CD4-positive, alpha-beta memory T cell (primary cell): ENCODE measurements at regions of chr19 and their contacts with region 1.

Region 1: DNA sequence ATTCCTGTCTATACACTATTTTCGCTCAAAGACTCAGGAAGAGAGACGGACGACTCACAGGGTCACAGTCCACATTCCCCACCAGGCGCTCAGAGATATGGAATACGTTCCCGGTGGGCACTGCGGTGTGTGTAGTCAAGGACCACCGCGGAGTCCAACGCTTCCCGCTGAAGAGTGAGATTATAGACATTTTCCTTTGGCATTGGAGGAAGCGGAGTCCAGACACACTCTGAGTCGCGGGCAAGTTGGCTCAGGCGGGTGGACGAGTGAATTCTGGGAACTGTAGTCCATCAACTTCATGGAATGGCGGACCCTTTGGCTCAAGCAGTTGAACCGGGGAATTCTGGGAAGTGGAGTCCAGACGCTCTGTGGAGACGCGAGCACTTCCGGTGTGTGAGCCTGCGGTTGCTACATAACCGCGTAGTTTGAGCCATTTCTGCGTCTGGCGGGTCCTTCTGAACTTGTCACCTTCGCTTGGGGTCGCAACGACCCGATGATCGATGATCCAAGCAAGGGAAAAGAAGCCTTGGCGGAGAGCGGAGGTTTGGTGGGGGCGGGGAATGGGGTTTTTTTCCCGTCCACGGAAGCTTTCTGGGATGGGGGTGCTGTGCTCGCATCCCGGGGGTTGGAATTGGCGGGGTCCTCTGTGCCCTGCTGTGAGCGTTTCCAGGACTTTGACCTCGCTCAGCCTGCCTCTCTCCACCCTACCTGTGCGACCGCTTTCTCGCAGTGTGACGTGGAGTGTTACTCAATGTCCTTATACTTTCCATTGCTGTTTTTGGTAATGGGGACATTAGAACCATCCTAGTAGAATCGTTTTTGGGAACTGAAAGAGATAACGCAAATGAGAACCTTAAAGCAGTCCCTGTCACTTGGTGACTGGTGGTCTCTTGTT is at the start of gene ZNF230:
- DNase-seq: peak; percentile 80 to 89 (median 83)
- H3K4me3 ChIP-seq: peak within 1 kb of the TSS; percentile 66 to 75
- H3K4me3 Mint-ChIP-seq: peak within 1 kb of the TSS; percentile 98 to 100 (median 99)
- H3K27ac ChIP-seq: peak within 1 kb of the TSS; percentile 58
- H3K27ac Mint-ChIP-seq: peak within 1 kb of the TSS; percentile 79 to 98 (median 97)
- H3K4me1 ChIP-seq: peaks cover 16% of the 10 kb centered on the region
- H3K4me1 Mint-ChIP-seq: peaks cover 22 to 30% (median 23%) of the 10 kb centered on the region in 4 donors
- H3K27me3 ChIP-seq: no peaks in the 10 kb centered on the region
- H3K27me3 Mint-ChIP-seq: no peaks in the 10 kb centered on the region
- total RNA-seq, gene ZNF230: 16.6 to 18.4 TPM

Region 2: DNA sequence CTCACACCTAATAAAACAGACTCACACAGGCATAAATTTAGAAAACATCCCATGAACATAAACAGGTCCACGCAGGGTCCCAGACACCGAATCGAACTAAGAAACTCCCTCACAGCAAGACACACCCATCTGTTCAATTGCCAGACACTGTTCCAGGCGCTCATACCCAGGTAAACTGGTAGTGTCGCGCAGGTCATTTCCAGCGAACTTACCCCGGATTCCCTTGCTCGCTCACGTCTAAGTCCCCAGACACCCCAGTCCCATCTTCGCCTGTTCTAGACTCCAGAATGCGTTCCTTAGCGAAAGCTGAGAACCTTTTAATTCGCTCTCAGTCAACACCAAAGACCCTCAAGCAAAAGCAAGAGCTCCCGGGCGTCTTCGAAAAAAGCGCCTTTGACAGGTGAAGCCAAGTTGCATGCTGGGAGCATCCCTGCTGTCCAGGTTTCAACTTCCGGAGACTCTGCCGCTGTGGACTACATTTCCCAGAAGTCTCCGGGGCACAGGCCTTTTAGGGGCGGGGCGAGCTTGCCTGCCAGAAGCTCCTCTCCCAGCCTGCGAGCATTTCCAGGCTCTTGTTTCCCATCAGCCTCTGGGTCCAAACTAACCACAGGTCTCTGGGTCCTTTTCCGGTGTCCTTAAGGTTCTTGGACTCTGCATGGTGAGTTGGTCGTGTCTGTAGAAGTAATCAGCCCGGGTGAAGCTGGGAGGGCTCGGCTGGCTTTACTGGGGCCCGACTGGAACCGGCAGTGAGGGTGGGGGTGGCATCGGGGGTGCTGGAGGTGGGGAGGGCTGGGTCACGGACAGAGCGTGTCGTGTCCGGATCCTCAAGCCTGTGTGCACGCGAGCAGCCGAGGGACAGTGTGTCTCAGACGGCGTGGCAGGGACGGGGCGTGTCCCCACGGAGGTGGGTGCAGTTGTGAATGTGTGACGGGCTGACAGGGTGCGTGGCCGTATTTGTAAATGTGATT is 175.7 kb before region 1 on chr19 and contains the start of gene ZNF283:
- CTCF ChIA-PET with region 1: no interaction called
- POLR2A ChIA-PET with region 1: no interaction called
- intact Hi-C with region 1: loop called (anchors 1 kb)
- DNase-seq: peak; percentile 73 to 80 (median 76)
- H3K4me3 ChIP-seq: peak within 1 kb of the TSS; percentile 70 to 73
- H3K4me3 Mint-ChIP-seq: peak within 1 kb of the TSS; percentile 73 to 94 (median 91)
- H3K27ac ChIP-seq: peak within 1 kb of the TSS; percentile 33
- H3K27ac Mint-ChIP-seq: peak within 1 kb of the TSS; percentile 41 to 89 (median 83)
- H3K4me1 ChIP-seq: peaks cover 13% of the 10 kb centered on the region
- H3K4me1 Mint-ChIP-seq: peaks cover 9 to 20% (median 16%) of the 10 kb centered on the region in 4 donors
- H3K27me3 ChIP-seq: no peaks in the 10 kb centered on the region
- H3K27me3 Mint-ChIP-seq: peaks cover 0 to 1% of the 10 kb centered on the region in 2 donors
- total RNA-seq, gene ZNF283: 18.1 to 20.7 TPM

Region 3: GRCh38 chr19:43928820-43929219 is 74.0 kb before region 1 on chr19:
- CTCF ChIA-PET with region 1: no interaction called
- POLR2A ChIA-PET with region 1: no interaction called
- intact Hi-C with region 1: no loop called
- DNase-seq: no peak
- H3K4me3 ChIP-seq: no peak overlapping the region
- H3K4me3 Mint-ChIP-seq: no peak overlapping the region
- H3K27ac ChIP-seq: no peak overlapping the region
- H3K27ac Mint-ChIP-seq: no peak overlapping the region
- H3K4me1 ChIP-seq: peaks cover 8% of the 10 kb centered on the region
- H3K4me1 Mint-ChIP-seq: peaks cover 5 to 24% (median 10%) of the 10 kb centered on the region in 4 donors
- H3K27me3 ChIP-seq: no peaks in the 10 kb centered on the region
- H3K27me3 Mint-ChIP-seq: no peaks in the 10 kb centered on the region

Region 4: DNA sequence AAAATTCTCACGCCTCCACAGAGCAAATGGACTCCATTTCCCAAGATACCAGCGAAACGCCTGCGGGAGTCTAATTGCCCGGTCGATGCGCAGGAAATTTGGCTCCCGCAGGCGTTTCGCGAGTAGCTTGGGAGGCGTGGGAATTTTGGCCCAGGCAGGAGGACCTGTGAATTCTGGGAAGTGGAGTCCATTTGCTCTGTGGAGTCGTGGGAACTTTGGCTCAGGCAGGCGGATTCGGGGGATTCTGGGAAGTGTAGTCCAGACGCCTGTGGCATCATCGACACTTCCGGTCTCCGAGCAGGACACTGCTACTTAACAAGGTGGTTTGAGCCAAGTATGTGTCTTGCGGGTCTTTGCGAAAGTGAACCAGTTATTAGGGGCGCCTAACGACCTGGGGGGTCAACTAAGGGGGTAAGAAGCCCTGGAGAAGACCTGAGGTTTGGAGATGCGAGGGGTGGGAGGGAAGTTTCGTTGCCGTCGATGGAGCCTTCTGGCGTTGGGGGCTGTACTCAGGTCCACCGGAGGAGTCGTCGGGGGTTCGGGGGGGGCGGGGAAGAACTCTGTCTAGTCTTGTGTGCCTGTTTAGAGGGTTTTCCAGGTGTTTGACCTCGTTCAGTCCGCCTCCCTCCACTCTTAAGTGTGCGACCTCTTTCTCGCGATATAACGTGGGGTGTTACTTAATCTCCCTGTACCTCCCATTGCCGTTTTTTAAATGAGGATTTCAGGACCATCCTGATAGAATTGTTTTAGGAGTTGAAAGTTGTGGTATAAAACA is 18.7 kb before region 1 on chr19 and contains the start of gene ZNF155:
- CTCF ChIA-PET with region 1: no interaction called
- POLR2A ChIA-PET with region 1: interaction called, 3 read pairs
- intact Hi-C with region 1: loop called (anchors 1 kb)
- DNase-seq: peak; percentile 64 to 71 (median 68)
- H3K4me3 ChIP-seq: peak within 1 kb of the TSS; percentile 59 to 90
- H3K4me3 Mint-ChIP-seq: peak within 1 kb of the TSS; percentile 92 to 99 (median 98)
- H3K27ac ChIP-seq: peak within 1 kb of the TSS; percentile 58
- H3K27ac Mint-ChIP-seq: peak within 1 kb of the TSS; percentile 74 to 98 (median 95)
- H3K4me1 ChIP-seq: peaks cover 14% of the 10 kb centered on the region
- H3K4me1 Mint-ChIP-seq: peaks cover 8 to 12% (median 10%) of the 10 kb centered on the region in 4 donors
- H3K27me3 ChIP-seq: no peaks in the 10 kb centered on the region
- H3K27me3 Mint-ChIP-seq: no peaks in the 10 kb centered on the region
- total RNA-seq, gene ZNF155: 12.9 to 14.1 TPM

Region 5: DNA sequence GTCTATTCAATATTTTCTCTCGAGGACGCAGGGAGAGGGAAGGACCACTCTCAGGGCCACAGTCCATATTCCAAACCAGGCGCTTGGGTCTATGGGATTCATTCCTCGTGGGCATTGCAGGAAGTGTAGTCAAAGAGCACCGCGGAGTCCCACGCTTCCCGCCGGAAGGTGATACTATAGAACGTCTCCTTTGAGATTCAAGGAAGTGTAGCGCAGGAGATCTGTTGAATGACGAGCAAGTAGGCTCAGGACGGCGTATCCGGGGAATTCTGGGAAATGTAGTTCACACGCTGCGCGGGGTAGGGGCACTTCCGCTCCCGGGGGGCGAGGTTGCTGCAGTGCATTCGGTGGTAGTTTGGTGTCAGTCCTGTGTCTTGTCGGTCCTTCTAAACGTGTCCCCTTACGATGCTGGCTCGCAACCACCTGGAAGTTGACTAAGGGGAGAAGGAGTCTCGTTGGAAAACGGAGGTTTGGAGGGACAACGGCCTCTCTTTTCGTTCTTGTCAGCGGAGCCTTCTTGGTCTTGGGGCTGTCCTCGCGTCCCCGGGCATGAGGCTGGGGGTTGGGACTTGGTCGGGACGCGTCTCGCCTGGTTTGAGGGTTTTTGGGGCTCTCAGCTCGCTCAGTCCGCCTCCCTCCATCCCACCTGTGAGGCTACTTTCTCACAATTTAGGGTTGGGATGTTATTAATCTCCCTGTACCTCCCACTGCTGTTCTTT is 69.2 kb after region 1 on chr19 and contains the start of gene ZNF284:
- CTCF ChIA-PET with region 1: interaction called, 3 read pairs
- POLR2A ChIA-PET with region 1: no interaction called
- intact Hi-C with region 1: loop called (anchors 2 kb)
- DNase-seq: peak; percentile 82 to 85 (median 83)
- H3K4me3 ChIP-seq: peak within 1 kb of the TSS; percentile 54 to 76
- H3K4me3 Mint-ChIP-seq: peak within 1 kb of the TSS; percentile 85 to 96 (median 92)
- H3K27ac ChIP-seq: peak within 1 kb of the TSS; percentile 39
- H3K27ac Mint-ChIP-seq: peak within 1 kb of the TSS; percentile 45 to 93 (median 86)
- H3K4me1 ChIP-seq: peaks cover 21% of the 10 kb centered on the region
- H3K4me1 Mint-ChIP-seq: peaks cover 17 to 31% (median 24%) of the 10 kb centered on the region in 4 donors
- H3K27me3 ChIP-seq: no peaks in the 10 kb centered on the region
- H3K27me3 Mint-ChIP-seq: peaks cover 0 to 1% of the 10 kb centered on the region in 2 donors
- total RNA-seq, gene ZNF284: 5.4 to 5.7 TPM

Region 6: GRCh38 chr19:44113138-44113783 is 110.4 kb after region 1 on chr19 and contains the start of gene ZNF225:
- CTCF ChIA-PET with region 1: no interaction called
- POLR2A ChIA-PET with region 1: no interaction called
- intact Hi-C with region 1: loop called (anchors 1 kb)
- DNase-seq: peak; percentile 80 to 85 (median 84)
- H3K4me3 ChIP-seq: peak within 1 kb of the TSS; percentile 92 to 96
- H3K4me3 Mint-ChIP-seq: peak within 1 kb of the TSS; percentile 96 to 100 (median 99)
- H3K27ac ChIP-seq: peak within 1 kb of the TSS; percentile 30
- H3K27ac Mint-ChIP-seq: peak within 1 kb of the TSS; percentile 75 to 98 (median 94)
- H3K4me1 ChIP-seq: peaks cover 19% of the 10 kb centered on the region
- H3K4me1 Mint-ChIP-seq: peaks cover 9 to 40% (median 23%) of the 10 kb centered on the region in 4 donors
- H3K27me3 ChIP-seq: no peaks in the 10 kb centered on the region
- H3K27me3 Mint-ChIP-seq: no peaks in the 10 kb centered on the region
- total RNA-seq, gene ZNF225: 10.7 to 13.9 TPM

Region 7: DNA sequence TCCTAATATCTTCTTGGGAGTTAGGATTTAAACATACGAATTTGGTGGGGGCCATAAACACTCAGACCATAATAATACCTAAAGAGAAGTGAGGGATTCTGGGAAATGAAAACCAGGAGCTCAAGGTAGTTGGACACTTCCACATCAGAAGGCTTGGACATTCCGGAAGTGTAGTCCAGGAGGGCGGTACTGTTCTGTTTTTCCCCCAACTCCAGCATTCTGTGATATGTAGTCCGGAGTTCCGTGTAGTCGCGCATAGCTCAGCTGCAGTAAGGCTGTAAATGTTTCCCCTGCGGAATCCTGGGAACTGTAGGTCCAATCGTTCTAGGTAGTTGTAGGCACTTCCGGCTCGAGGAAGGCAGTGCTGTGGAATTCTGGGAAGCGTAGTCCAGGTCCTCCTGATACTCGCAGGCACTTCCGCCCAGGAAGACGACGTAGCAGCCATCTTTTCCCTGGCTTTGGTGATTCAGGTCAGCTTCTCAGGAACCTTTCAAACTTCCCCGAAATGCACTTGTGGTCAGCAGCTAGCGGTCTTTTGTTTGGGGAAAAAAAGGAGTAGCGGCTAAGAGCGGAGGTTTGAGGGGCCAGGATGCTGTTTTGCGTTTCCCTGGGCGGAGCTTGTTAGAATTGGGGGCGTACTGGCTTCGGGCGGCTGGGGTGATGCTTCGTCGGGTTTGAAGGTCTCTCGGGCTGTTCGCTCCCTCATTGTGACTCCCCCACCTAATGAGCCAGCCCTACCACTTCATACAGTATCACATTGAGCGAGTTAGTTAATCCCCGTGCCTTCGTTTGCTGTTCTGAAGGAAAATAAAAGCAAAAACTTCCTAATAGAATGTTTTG is 162.1 kb after region 1 on chr19 and contains the start of gene ZNF226:
- CTCF ChIA-PET with region 1: no interaction called
- POLR2A ChIA-PET with region 1: interaction called, 5 read pairs
- intact Hi-C with region 1: loop called (anchors 1 kb)
- DNase-seq: peak; percentile 76 to 84 (median 82)
- H3K4me3 ChIP-seq: peak within 1 kb of the TSS; percentile 75 to 81
- H3K4me3 Mint-ChIP-seq: peak within 1 kb of the TSS; percentile 94 to 98 (median 98)
- H3K27ac ChIP-seq: peak within 1 kb of the TSS; percentile 68
- H3K27ac Mint-ChIP-seq: peak within 1 kb of the TSS; percentile 82 to 98 (median 96)
- H3K4me1 ChIP-seq: peaks cover 23% of the 10 kb centered on the region
- H3K4me1 Mint-ChIP-seq: peaks cover 21 to 34% (median 27%) of the 10 kb centered on the region in 4 donors
- H3K27me3 ChIP-seq: no peaks in the 10 kb centered on the region
- H3K27me3 Mint-ChIP-seq: peaks cover 0 to 1% of the 10 kb centered on the region in 2 donors
- total RNA-seq, gene ZNF226: 51.0 to 55.6 TPM

Region 8: DNA sequence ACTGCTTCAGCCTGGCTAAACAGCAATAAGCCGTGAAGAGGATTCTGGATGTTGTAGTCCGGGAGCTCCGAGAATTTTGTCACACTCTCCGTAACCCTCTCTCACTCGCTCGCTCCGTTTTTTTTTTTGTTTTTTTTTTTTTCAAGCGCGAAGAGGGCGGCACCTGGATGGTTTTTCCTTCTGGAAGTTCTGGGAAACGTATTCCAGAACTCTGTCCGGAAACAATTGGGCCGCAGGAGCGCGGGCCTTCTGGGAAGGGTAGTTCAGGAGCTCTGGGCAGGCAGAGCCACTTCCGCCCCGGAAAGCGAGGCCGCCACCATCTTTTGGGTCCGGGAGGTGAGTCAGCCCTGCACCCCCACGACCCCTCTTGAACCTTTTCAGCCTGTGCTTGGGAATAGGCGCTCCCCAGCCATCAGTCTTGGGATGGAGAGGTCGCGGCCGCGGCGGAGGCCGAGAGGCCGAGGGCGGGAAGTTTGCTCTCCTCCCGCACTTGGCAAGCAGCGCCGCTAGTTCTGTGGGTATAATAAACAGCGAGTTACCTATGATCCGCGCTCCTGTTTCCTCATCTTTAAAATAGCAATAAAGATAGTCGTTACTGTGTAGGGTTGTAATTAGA is 209.5 kb after region 1 on chr19 and contains the start of gene ZNF227:
- CTCF ChIA-PET with region 1: no interaction called
- POLR2A ChIA-PET with region 1: interaction called, 4 read pairs
- intact Hi-C with region 1: loop called (anchors 1 kb)
- DNase-seq: peak; percentile 73 to 86 (median 79)
- H3K4me3 ChIP-seq: peak within 1 kb of the TSS; percentile 52 to 93
- H3K4me3 Mint-ChIP-seq: peak within 1 kb of the TSS; percentile 96 to 99 (median 98)
- H3K27ac ChIP-seq: peak within 1 kb of the TSS; percentile 78
- H3K27ac Mint-ChIP-seq: peak within 1 kb of the TSS; percentile 85 to 99 (median 97)
- H3K4me1 ChIP-seq: peaks cover 17% of the 10 kb centered on the region
- H3K4me1 Mint-ChIP-seq: peaks cover 20 to 34% (median 23%) of the 10 kb centered on the region in 4 donors
- H3K27me3 ChIP-seq: no peaks in the 10 kb centered on the region
- H3K27me3 Mint-ChIP-seq: no peaks in the 10 kb centered on the region
- total RNA-seq, gene ZNF227: 51.6 to 54.4 TPM